ENCODE measurements at regions of chr18 and their contacts with region 1.

Region 1: DNA sequence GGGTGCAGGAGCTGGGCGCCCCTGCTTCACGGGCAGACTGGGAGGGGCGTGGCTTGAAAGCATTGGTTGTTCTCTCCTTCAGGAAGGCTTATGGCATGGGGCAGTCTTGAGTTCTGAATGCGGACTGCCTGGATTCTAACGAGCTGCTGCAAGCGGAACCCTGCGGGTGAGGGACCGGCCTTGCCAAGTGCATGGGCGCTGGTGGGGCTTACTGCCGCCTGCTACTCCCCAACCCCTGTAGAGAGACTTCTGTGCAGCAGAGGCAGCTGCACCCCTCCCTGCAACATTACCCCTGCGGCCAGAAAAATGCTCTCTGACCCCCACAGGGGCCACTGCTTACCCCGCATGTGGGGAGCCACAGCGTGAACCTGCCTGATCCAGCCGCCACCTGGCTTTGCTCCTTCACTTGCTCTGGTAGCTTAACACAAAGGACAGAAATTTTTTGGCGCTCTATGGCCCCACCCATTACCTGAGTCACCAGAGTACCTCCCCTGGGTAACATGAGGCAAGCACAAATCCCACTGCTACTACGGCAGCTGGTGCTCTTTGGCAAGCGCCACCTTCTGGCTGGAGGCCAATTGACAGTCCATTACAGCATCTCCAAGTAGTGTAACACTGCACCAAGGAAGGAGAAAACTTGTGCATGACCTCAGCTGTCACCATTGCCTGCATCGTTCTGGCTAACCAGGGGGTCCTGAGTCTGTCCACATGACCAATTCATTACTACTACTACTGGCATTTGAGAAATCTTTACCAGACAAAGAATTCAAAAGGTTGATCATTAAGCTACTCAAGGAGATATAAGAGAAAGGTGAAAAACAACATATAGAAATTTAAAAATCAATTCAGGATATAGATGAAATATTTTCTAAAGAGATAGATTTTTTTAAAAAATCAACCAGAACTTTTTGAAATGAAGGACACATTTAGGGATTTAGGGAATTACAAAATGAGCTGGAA is 35.4 kb downstream of the MYL12B start:
- DNase-seq: peak; percentile 96
- H3K4me3 Mint-ChIP-seq: peak overlapping the region; percentile 88
- H3K27ac Mint-ChIP-seq: peak overlapping the region; percentile 86
- H3K4me1 Mint-ChIP-seq: peaks cover 13% of the 10 kb centered on the region
- H3K27me3 Mint-ChIP-seq: peaks cover 33% of the 10 kb centered on the region

Region 2: DNA sequence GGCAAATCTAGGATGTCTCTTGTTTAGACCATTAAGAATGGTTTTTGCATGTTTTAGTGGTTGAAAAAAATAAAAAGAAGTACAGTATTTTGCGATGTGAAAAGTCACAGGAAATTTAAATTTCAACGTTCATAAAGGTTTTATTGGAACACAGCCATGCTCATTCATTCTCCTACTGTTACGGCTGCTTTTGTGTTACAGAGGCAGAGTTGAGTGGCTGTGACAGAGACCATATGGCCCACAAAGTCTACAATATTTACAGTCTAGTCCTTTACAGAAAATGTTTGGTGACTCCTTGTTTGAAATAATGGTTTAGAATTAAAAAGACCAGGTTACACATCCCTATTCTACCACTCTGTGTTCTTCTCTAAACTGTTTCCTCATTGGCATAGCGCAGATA is 125.7 kb before region 1 on chr18:
- CTCF ChIA-PET with region 1: no interaction called
- POLR2A ChIA-PET with region 1: no interaction called
- DNase-seq: no peak
- H3K4me3 Mint-ChIP-seq: no peak overlapping the region
- H3K27ac Mint-ChIP-seq: no peak overlapping the region
- H3K4me1 Mint-ChIP-seq: peaks cover 5% of the 10 kb centered on the region
- H3K27me3 Mint-ChIP-seq: peaks cover 1% of the 10 kb centered on the region

Region 3: GRCh38 chr18:3261371-3262246 is 35.7 kb before region 1 on chr18 and contains the start of gene MYL12B:
- CTCF ChIA-PET with region 1: interaction called, 11 read pairs
- POLR2A ChIA-PET with region 1: interaction called, 3 read pairs
- DNase-seq: peak; percentile 82
- H3K4me3 Mint-ChIP-seq: peak within 1 kb of the TSS; percentile 86
- H3K27ac Mint-ChIP-seq: peak within 1 kb of the TSS; percentile 99
- H3K4me1 Mint-ChIP-seq: peaks cover 76% of the 10 kb centered on the region
- H3K27me3 Mint-ChIP-seq: no peaks in the 10 kb centered on the region
- total RNA-seq, gene MYL12B: 351 to 395 TPM

Region 4: GRCh38 chr18:3281456-3282400 is 15.6 kb before region 1 on chr18:
- CTCF ChIA-PET with region 1: interaction called, 20 read pairs
- POLR2A ChIA-PET with region 1: no interaction called
- DNase-seq: peak; percentile 49
- H3K4me3 Mint-ChIP-seq: no peak overlapping the region
- H3K27ac Mint-ChIP-seq: no peak overlapping the region
- H3K4me1 Mint-ChIP-seq: no peaks in the 10 kb centered on the region
- H3K27me3 Mint-ChIP-seq: no peaks in the 10 kb centered on the region

Region 5: DNA sequence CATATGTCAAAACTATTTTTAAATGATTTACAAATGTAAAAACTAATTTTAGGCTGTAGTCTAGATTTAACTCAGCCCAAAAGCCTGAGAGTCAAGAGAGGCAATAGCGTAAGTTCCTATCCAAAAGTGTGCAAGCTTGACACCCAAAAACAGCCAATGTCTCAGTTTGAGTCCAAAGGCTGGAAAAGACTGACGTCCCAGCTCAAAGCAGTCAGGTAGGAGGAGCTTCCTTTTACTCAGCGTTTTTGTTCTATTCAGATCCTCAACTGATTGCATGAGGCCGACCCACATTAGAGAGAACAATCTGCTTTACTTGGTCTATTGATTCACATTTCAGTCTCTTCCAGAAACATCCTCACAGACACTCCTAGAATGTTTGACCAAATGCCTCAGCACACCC is 16.4 kb after region 1 on chr18:
- CTCF ChIA-PET with region 1: interaction called, 11 read pairs
- POLR2A ChIA-PET with region 1: no interaction called
- DNase-seq: no peak
- H3K4me3 Mint-ChIP-seq: no peak overlapping the region
- H3K27ac Mint-ChIP-seq: no peak overlapping the region
- H3K4me1 Mint-ChIP-seq: no peaks in the 10 kb centered on the region
- H3K27me3 Mint-ChIP-seq: peaks cover 2% of the 10 kb centered on the region

Region 6: GRCh38 chr18:3454365-3455089 is 157.2 kb after region 1 on chr18:
- CTCF ChIA-PET with region 1: interaction called, 10 read pairs
- POLR2A ChIA-PET with region 1: interaction called, 4 read pairs
- DNase-seq: peak; percentile 57
- H3K4me3 Mint-ChIP-seq: peak overlapping the region; percentile 91
- H3K27ac Mint-ChIP-seq: peak overlapping the region; percentile 97
- H3K4me1 Mint-ChIP-seq: peaks cover 66% of the 10 kb centered on the region
- H3K27me3 Mint-ChIP-seq: no peaks in the 10 kb centered on the region

Region 7: GRCh38 chr18:3585656-3586509 is 288.6 kb after region 1 on chr18:
- CTCF ChIA-PET with region 1: interaction called, 13 read pairs
- POLR2A ChIA-PET with region 1: no interaction called
- DNase-seq: peak; percentile 69
- H3K4me3 Mint-ChIP-seq: no peak overlapping the region
- H3K27ac Mint-ChIP-seq: peak overlapping the region; percentile 82
- H3K4me1 Mint-ChIP-seq: peaks cover 41% of the 10 kb centered on the region
- H3K27me3 Mint-ChIP-seq: no peaks in the 10 kb centered on the region

Region 8: DNA sequence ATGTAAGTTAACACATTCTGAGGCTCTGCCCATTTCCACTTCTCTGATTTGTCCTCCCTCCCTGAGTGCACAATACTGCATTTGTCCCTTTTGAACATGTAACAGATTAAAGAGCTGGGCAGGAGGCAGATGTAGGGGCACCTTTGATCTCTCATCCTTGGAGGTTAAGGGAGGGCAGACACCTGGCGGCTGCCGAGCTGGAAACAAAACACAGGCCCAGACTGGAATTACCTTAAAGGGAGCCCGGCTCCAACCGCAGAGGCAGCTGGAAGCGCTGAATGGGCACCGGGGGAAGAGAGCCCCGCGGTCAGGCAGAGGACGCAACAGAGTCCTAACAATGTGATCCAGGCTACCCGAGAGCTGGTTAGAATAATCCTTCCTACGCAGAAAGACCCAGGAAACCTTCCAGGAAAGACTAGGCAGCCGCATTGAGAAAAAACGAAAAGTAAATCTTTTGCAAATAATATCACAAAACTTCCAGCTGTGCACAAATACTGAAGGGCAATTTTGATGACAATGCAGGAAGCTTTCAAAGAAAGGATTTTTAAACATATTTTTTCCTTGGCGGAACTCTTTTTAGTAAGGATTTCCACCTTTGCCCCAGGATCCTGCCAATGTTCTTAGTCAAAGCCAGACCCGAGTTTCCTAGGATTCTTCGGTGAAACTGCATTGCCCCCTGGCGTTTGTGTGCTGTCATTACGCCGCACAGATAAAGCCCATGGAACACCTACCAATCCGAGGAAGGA is 368.6 kb after region 1 on chr18:
- CTCF ChIA-PET with region 1: interaction called, 27 read pairs
- POLR2A ChIA-PET with region 1: no interaction called
- DNase-seq: peak; percentile 76
- H3K4me3 Mint-ChIP-seq: no peak overlapping the region
- H3K27ac Mint-ChIP-seq: peak overlapping the region; percentile 71
- H3K4me1 Mint-ChIP-seq: peaks cover 26% of the 10 kb centered on the region
- H3K27me3 Mint-ChIP-seq: peaks cover 5% of the 10 kb centered on the region